HepG2 (cell line): ENCODE measurements at regions of chr14 and their contacts with region 1.

Region 1: DNA sequence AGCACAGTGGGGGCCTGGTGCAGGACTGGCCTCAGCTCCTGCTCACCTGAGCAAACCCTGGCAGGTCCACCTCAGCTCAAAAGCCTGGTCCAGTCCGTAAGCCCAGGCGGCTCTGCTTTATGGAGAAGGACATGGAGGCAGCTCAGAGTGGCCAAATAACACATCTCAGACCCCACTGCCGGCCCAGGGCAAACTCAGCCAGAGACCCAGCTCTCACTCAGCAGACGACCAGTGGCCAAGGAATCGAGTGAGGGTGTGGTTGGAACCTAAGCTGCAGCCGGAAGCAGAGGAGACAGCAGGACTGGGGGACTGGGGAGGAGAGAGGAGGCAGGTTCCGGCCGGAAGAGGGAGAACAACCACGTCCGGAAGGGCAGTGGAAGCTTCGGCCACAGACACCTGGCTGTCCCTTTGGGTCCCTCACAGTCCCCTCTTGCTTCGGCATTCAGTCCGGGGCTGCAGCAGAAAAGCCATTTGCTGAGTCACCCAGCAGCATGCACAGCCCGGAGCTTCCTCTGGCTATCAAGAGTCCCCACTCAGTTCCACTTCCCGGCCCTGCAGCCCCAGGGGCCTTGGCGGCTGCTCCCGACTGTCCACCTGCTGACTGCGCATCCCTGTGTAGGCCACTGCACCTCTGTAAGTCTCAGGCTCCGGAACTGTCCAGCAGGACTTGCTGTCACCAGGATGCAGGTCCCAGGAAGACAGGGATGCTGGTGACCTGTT is 104.0 kb downstream of the CALM1 start:
- DNase-seq: peak; percentile 46
- ATAC-seq: peak; percentile 84
- H3K4me3 ChIP-seq: peak overlapping the region; percentile 38 to 73 (median 46)
- H3K27ac ChIP-seq: peak overlapping the region; percentile 60
- H3K4me1 ChIP-seq: peaks cover 44% of the 10 kb centered on the region
- H3K27me3 ChIP-seq: no peaks in the 10 kb centered on the region
- CTCF ChIP-seq: peak; percentile 55
- EP300 ChIP-seq: no peak
- POLR2A ChIP-seq: peak; percentile 53 to 58; a peak in 1 of 4 replicates
- RAD21 ChIP-seq: peak; percentile 35; the same call in 1 of the 2 replicates

Region 2: GRCh38 chr14:90513161-90514014 is 12.6 kb after region 1 on chr14:
- CTCF ChIA-PET with region 1: no interaction called
- POLR2A ChIA-PET with region 1: interaction called, 60 read pairs
- in situ Hi-C with region 1: no loop called
- intact Hi-C with region 1: no loop called
- DNase-seq: peak; percentile 93
- ATAC-seq: peak; percentile 96
- H3K4me3 ChIP-seq: peak overlapping the region; percentile 14 to 56 (median 20); a peak in 5 of 6 replicates
- H3K27ac ChIP-seq: peak overlapping the region; percentile 83
- H3K4me1 ChIP-seq: peaks cover 85% of the 10 kb centered on the region
- H3K27me3 ChIP-seq: no peaks in the 10 kb centered on the region
- CTCF ChIP-seq: peak; percentile 6; the same call in 1 of the 2 replicates
- EP300 ChIP-seq: peak; percentile 85 to 88
- POLR2A ChIP-seq: peak in 1 of 2 experiments; percentile 2; a peak in 2 of 4 replicates
- RAD21 ChIP-seq: peak; percentile 52; the same call in 1 of the 2 replicates

Region 3: DNA sequence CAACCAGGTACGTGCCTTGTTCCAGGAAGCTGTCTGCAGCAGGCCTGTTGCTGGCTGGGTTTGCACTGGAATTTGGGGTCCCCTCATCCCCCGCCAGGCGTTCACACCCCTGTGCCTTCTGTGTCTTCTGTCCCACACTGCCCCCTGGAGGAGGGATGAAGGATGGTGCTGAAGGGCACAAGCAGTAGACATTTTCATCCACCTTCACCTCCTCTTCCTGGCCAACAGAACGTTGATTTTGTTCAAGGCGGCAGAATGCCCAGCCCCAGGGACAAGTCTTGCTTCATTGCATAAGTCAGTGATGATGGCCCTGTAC is 18.1 kb after region 1 on chr14:
- CTCF ChIA-PET with region 1: no interaction called
- POLR2A ChIA-PET with region 1: interaction called, 60 read pairs
- in situ Hi-C with region 1: no loop called
- intact Hi-C with region 1: no loop called
- DNase-seq: peak; percentile 53
- ATAC-seq: peak; percentile 63
- H3K4me3 ChIP-seq: no peak overlapping the region
- H3K27ac ChIP-seq: no peak overlapping the region
- H3K4me1 ChIP-seq: peaks cover 52% of the 10 kb centered on the region
- H3K27me3 ChIP-seq: peaks cover 3 to 5% of the 10 kb centered on the region in 2 experiments; a peak in 1 of 5 replicates
- CTCF ChIP-seq: peak; percentile 90
- EP300 ChIP-seq: no peak
- POLR2A ChIP-seq: no peak
- RAD21 ChIP-seq: peak; percentile 75